Mammary epithelial cell (primary cell): ENCODE measurements at regions of chr14 and their contacts with region 1.

Region 1: DNA sequence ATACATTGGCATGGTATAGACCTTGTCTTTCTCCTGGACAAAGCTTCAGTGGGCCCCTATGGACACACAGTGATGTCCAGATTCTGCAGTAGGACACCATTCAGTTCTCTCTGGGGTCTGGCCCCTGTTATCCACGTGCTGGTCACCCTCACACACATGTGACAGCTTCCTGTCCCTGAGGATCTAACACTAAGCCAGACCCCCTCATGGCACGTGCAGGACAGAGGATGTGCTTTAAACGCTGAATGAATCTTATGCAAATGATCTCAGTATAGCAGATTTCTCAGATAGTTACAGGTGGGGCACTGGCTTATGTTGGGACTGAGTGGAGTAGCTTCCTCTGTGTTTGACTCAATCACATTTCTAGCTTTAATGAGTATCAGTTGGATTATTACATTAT is 33.7 kb downstream of the SLC24A4 start:
- DNase-seq: no peak
- H3K4me3 ChIP-seq: no peak overlapping the region
- H3K27ac ChIP-seq: no peak overlapping the region
- H3K4me1 ChIP-seq: no peaks in the 10 kb centered on the region
- H3K27me3 ChIP-seq: no peaks in the 10 kb centered on the region
- CTCF ChIP-seq: no peak

Region 2: GRCh38 chr14:91575469-91576208 is 781.0 kb before region 1 on chr14:
- CTCF ChIA-PET with region 1: interaction called, 11 read pairs
- dilution Hi-C with region 1: no loop called
- in situ Hi-C with region 1: no loop called
- intact Hi-C with region 1: no loop called
- DNase-seq: no peak
- H3K4me3 ChIP-seq: no peak overlapping the region
- H3K27ac ChIP-seq: no peak overlapping the region
- H3K4me1 ChIP-seq: peaks cover 7% of the 10 kb centered on the region
- H3K27me3 ChIP-seq: peaks cover 3% of the 10 kb centered on the region
- CTCF ChIP-seq: no peak

Region 3: DNA sequence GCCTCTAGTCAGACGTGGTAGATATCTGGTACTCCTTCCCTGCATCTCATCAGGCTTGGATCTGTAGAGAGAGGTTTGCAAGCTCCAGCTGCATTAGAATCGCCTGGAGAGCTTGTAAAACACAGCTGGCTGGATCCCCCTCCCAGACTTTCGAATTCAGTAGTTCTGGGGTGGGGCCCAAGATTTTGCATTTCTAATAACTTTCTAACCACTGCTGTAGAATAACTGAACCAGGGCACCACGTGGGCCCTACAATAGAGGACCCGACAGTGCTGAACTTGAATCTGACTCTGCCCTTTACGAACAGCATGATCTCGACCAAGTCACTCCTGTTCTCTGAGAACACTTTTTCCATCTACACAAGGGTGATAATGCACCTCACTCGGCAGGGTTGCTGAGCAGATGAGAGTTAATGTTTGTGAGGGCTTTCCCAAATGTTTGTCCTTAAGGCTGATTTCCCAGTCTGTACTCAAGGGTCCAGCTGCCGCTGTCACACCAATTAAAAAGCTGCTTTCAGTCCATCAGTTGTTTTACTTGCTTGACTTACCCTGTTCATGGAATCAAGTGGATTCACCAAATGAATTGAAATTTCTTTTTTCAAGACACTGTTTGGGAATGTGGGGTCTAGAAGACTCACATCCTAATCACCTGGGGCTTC is 120.3 kb before region 1 on chr14:
- CTCF ChIA-PET with region 1: no interaction called
- dilution Hi-C with region 1: loop called (anchors 5 kb)
- in situ Hi-C with region 1: no loop called
- intact Hi-C with region 1: no loop called
- DNase-seq: no peak
- H3K4me3 ChIP-seq: no peak overlapping the region
- H3K27ac ChIP-seq: no peak overlapping the region
- H3K4me1 ChIP-seq: no peaks in the 10 kb centered on the region
- H3K27me3 ChIP-seq: no peaks in the 10 kb centered on the region
- CTCF ChIP-seq: no peak

Region 4: DNA sequence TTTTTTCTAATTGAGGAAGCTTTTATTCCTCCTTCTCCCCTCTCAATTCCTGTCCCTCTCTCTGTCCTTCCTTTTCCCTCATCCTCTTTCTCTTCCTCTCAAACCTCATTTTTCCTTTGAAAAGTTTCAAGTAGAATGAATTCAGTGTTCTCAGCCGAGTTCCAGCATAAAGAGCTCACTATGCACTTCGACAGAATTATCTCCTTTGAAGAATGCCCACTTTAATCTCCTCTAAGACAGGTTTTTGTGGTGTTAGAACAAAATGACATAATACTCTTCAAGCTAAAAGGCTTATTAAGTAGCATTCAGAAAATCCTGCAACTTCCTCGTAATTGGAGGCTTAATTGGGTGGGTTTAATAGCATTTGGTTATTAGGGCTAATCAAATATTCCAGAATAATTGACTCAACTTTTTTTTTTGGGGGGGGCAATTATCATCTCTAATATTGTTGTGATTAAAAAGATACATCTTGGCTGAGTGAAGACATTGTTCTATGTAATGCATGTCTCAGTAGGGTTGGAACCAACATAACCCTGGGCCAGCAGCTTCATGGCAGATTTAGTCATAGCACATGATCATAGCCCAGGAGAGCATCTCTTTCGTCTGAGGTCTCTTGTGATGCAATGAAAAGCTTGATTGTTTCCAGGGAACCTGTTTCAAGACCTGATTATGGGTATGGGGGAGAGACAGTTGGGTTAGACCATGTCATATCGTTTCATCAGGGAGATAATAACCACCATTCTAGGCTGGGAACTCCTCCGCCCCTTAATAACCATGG is 58.7 kb before region 1 on chr14:
- CTCF ChIA-PET with region 1: no interaction called
- dilution Hi-C with region 1: loop called (anchors 5 kb)
- in situ Hi-C with region 1: no loop called
- intact Hi-C with region 1: no loop called
- DNase-seq: no peak
- H3K4me3 ChIP-seq: no peak overlapping the region
- H3K27ac ChIP-seq: no peak overlapping the region
- H3K4me1 ChIP-seq: no peaks in the 10 kb centered on the region
- H3K27me3 ChIP-seq: no peaks in the 10 kb centered on the region
- CTCF ChIP-seq: no peak

Region 5: GRCh38 chr14:92426191-92426590 is 69.5 kb after region 1 on chr14:
- CTCF ChIA-PET with region 1: no interaction called
- dilution Hi-C with region 1: loop called (anchors 5 kb)
- in situ Hi-C with region 1: no loop called
- intact Hi-C with region 1: no loop called
- DNase-seq: peak; percentile 9
- H3K4me3 ChIP-seq: no peak overlapping the region
- H3K27ac ChIP-seq: no peak overlapping the region
- H3K4me1 ChIP-seq: no peaks in the 10 kb centered on the region
- H3K27me3 ChIP-seq: no peaks in the 10 kb centered on the region
- CTCF ChIP-seq: no peak